Right cardiac atrium (tissue), 5 donors: ENCODE measurements at regions of chr17 and their contacts with region 1.

Region 1: DNA sequence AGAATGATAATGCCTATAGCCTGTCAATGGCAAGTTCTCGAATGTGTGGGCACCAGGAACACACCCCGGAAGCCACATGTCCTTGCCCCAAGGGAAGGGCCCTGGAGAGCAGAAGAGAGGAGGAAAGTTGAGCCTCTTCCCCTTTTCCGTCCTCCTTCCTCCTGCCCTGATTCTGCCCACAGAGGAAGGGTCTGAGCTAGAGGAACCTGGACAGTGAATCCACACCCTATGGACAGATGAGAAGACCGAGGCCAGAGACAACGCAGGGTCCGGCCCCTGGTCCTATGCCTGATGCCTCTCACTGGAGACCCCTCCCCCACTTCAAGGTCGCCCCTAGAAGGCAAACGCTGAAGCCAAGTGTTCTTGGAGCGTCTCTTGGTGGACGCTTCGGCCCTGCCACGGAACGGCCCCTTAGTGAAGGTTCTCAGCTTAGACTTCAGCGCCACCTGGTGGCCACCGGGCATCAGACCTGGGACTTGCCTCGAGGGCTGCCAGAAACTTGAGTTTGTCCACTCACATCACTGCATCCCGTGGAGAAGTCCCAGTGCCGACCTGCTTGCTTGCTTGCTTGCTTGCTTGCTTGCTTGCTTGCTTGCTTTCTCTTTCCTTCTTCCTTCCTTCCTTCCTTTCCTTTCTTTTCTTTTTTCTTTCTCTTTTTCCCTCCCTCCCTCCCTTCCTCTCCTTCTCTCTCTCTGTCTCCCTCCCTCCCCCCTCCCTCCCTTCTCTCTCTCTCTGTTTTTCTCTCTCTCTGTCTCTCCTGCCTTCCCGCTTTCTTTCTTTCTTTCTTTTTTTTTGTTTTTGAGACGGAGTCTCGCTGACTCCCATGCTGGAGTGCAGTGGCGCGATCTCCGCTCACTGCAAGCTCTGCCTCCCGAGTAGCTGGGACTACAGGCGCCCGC is 20.6 kb upstream of the SPNS3 start:
- DNase-seq: peak; percentile 94 to 97 (median 97)
- ATAC-seq: peak; percentile 96 to 97
- H3K4me3 ChIP-seq: no peak overlapping the region
- H3K27ac ChIP-seq: no peak overlapping the region
- H3K4me1 ChIP-seq: peaks cover 2% of the 10 kb centered on the region
- H3K27me3 ChIP-seq: no peaks in the 10 kb centered on the region

Region 2: DNA sequence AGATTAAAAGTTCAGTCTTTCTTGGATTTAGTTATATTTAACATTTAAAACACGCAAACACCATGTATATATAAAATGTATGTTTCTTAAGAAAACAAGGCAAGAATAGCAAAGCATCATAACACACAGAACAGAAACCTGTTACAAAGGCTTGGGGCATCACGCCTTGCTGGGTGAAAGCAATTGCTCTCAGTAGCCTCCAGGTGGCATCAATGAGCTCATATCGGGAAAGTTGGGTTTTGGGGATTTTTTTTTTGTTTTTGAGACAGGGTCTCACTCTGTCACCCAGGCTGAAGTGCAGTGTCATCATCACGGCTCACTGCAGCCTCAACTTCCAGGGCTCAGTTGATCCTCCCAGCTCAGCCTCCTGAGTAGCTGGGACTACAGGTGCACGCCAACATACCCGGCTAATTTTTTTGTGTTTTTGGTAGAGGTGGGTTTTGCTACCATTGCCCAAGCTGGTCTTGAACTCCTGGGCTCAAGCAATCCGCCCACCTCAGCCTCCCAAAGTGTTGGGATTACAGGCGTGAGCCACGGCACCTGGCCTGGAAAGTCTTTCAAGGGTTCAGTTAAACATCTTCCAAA is 213.3 kb before region 1 on chr17:
- intact Hi-C with region 1: loop called in 3 of 4 experiments (anchors 5 kb)
- DNase-seq: no peak
- ATAC-seq: no peak
- H3K4me3 ChIP-seq: no peak overlapping the region
- H3K27ac ChIP-seq: no peak overlapping the region
- H3K4me1 ChIP-seq: no peaks in the 10 kb centered on the region
- H3K27me3 ChIP-seq: no peaks in the 10 kb centered on the region

Region 3: DNA sequence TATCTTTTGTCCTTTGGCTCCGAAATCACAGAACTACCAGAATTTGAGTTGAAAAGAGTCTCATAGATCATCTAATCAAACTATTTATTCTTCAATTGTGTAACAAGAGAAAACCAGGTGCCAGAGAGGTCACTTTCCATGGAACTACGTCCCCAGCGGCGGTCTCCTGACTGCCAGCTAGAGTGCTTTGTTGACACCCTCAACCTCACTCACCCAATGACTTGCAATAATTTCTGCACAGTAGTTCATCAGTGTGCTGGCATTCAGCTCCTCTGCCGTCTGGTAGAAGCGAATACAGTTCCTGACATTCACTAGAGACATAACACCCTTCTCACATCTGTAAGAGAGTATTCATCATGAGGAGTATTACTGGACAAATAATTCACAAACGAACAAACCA is 203.6 kb before region 1 on chr17:
- intact Hi-C with region 1: loop called in 2 of 4 experiments (anchors 5 kb)
- DNase-seq: no peak
- ATAC-seq: peak in 1 of 2 donors; percentile 40
- H3K4me3 ChIP-seq: no peak overlapping the region
- H3K27ac ChIP-seq: no peak overlapping the region
- H3K4me1 ChIP-seq: no peaks in the 10 kb centered on the region
- H3K27me3 ChIP-seq: no peaks in the 10 kb centered on the region

Region 4: DNA sequence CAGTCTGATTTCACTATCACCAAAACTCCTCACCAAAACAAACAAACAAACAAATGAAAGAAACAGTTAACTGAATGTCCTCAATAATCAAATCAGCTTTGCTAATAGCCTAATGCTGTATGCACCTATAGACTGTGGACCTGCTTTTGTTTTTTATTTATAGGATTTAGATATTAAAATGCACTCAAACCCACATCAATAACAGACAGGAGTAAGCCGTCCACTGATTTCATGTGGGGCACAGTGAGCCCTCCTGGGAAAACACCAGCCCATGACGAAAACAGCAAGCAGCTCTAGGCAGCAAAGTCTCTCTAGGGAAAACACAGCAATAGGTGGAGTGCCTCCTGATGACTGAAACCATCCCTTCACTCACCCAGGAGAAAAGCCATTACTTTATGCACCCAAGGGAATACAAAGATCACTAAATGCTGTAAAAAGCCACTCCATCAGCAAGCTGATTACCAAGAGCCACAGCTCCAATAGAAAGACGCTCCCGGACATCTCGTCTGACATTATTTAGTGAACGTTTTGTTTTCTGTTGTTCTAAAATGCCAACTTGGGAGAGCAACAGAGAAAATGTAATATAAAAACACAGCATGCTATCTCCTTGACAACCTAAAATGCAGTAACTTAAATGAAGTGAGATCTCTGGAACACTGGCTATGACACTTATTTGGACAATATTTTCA is 197.2 kb before region 1 on chr17:
- intact Hi-C with region 1: loop called (anchors 5 kb)
- DNase-seq: no peak
- ATAC-seq: no peak
- H3K4me3 ChIP-seq: no peak overlapping the region
- H3K27ac ChIP-seq: no peak overlapping the region
- H3K4me1 ChIP-seq: no peaks in the 10 kb centered on the region
- H3K27me3 ChIP-seq: no peaks in the 10 kb centered on the region

Region 5: GRCh38 chr17:4375039-4375748 is 38.0 kb before region 1 on chr17:
- intact Hi-C with region 1: no loop called
- DNase-seq: no peak
- ATAC-seq: no peak
- H3K4me3 ChIP-seq: no peak overlapping the region
- H3K27ac ChIP-seq: no peak overlapping the region
- H3K4me1 ChIP-seq: no peaks in the 10 kb centered on the region
- H3K27me3 ChIP-seq: no peaks in the 10 kb centered on the region